ENCODE measurements at regions of chr7 and their contacts with region 1.

Region 1: GRCh38 chr7:105482409-105482808 is 39.7 kb downstream of the PUS7 start:
- DNase-seq: no peak
- ATAC-seq: no peak
- H3K4me3 ChIP-seq: no peak overlapping the region
- H3K27ac ChIP-seq: no peak overlapping the region
- H3K4me1 ChIP-seq: no peaks in the 10 kb centered on the region
- H3K27me3 ChIP-seq: no peaks in the 10 kb centered on the region
- CTCF ChIP-seq: no peak

Region 2: DNA sequence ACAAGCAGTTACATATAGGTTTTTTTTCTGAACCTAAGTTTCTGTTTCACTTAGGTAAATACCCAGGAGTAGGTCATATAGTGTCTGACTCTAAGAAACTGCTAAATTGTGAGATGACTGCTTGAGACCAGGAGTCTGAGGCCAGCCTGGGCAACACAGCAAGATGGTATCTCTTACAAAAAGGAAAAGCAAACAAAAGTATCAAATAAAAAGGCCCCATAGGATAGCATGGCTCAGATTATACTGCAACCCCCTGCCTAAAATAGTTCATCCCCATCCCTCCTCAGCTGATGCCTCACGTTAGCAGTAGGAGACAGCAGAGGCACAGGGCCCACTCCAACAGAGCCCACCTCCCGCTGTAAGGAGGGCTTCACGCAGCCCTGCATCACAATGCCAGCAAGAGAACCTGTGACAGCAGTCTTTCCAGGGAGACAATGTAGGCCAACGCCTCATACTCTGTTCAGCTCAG is 183.9 kb before region 1 on chr7:
- CTCF ChIA-PET with region 1: no interaction called
- POLR2A ChIA-PET with region 1: no interaction called
- in situ Hi-C with region 1: no loop called
- intact Hi-C with region 1: no loop called
- DNase-seq: no peak
- ATAC-seq: peak; percentile 66
- H3K4me3 ChIP-seq: no peak overlapping the region
- H3K27ac ChIP-seq: peak overlapping the region; percentile 5; the same call in 1 of the 2 replicates
- H3K4me1 ChIP-seq: peaks cover 19% of the 10 kb centered on the region
- H3K27me3 ChIP-seq: no peaks in the 10 kb centered on the region
- CTCF ChIP-seq: no peak

Region 3: GRCh38 chr7:105461518-105461917 is 20.9 kb before region 1 on chr7:
- CTCF ChIA-PET with region 1: no interaction called
- POLR2A ChIA-PET with region 1: interaction called, 10 read pairs
- in situ Hi-C with region 1: no loop called
- intact Hi-C with region 1: no loop called
- DNase-seq: no peak
- ATAC-seq: no peak
- H3K4me3 ChIP-seq: no peak overlapping the region
- H3K27ac ChIP-seq: no peak overlapping the region
- H3K4me1 ChIP-seq: no peaks in the 10 kb centered on the region
- H3K27me3 ChIP-seq: no peaks in the 10 kb centered on the region
- CTCF ChIP-seq: no peak